Left ventricle myocardium superior (tissue), 1 donor: ENCODE measurements at regions of chr7 and their contacts with region 1.

Region 1: DNA sequence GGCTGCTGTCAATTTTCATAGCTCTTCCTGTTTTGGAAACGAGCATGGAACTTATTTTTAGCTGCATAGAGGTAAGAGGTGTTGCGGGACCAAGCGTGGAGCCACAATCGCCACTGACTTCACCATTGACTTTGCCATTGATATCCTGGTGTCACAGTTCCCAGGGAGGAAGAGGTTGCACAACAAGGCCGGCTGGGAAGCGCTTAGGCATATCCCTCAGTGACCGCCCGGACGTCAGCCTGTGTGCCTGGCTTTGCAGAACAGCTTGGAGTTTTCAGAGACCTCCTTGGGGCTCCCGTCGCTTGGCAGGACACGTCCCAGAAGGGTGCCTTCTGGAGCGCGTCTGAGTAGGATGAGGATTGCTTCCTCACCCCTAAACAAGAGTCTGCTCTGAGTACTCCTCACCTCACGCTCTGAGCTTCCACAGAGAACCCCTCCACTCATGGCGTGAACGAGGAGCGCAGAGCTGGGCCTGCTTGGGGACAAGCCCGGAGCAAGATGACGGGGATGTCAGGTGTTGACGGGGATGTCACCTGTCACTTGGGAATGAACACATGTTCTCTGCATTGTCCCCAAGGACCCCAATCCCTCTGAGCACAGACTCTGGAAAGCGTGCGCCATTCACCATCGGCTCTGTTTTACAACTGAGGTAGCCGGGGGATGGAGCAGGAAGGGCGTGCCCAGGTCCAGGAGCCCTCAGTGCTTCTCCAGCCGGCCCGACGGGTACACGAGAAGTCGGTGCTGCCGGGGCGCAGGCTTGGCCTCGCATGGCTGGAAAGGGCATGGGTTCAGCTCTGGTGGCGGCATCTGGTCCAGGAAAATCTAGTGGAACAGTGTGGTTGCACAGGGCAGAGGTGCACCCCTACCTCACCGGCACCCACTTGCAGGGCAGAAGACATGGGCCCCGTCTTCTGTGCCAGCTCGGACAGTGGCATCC is 192.3 kb upstream of the SHH start:
- DNase-seq: no peak
- ATAC-seq: no peak

Region 2: DNA sequence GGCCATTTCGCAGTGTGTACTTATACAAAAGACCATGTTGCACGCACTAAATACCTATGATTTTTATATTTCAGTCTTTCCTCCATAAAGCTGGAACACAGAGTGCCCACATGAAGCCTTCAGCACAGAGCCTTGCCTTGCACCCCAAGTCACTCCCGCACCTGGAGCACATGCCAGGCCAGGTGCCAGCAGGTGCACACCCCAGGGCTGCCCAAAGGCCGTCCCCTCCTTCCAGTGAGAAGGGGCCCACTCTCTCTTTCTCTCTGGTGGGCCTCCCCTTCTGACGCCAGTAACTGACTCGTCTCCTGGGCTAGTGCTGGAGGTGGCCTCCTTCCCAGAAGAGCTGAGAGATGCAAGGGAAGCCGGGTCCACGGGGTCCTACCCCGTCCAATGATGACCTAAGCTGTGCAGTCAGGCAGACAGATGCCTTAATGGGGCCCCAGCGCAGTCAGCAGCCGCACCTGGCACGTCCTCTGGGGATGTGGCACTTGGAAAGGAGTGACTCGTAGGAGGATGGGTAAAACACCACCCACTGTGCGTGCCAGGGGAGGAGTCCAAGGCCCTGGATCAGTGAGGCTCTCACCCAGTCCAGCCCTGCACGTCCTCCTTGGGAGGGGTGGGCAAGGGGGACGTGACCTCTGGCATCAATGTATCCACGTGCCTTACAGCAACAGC is 174.6 kb before region 1 on chr7:
- intact Hi-C with region 1: loop called (anchors 5 kb)
- DNase-seq: peak; percentile 16
- ATAC-seq: no peak

Region 3: DNA sequence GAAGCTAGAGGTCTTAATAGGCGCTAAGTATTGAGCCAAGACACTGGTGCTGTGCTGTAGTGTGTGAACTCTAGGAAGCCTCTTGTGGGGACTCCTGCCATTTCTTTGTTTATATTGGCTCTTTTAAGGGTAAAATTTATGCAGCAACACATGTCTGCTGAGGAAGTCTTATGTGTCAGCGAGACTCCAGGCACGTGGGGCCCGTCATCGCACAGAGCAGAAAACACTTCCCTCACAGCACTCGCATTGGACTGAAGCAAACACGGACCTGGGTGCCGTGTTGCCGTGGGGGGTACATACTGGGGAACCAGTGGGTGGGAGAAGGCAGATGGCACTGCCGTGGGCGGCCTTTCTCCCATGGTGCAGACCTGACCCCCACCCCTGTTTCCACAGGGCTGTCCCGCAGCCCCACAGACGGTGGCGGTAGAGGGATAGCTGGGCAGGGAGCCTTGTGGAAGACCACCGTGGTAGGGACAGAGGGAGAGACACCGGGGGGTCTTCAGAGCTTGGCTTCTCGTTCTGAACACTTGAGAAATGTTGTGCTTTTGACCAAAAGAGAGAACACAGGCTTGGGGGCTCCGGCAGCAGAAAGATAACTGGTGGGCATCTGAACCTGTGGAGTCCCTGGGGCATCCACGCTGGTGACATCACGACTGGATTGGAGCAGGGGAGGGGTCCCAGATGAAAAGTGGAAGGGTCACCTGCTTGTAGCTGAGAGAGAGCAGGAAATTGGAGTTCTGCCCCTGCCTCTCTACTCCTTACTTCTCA is 92.4 kb after region 1 on chr7:
- intact Hi-C with region 1: no loop called
- DNase-seq: no peak
- ATAC-seq: no peak